ENCODE measurements at regions of chr1 and their contacts with region 1.

Region 1: GRCh38 chr1:156090822-156091188 is 8.5 kb upstream of the MEX3A start:
- DNase-seq: peak; percentile 73
- ATAC-seq: peak; percentile 95
- H3K4me3 ChIP-seq: no peak overlapping the region
- H3K27ac ChIP-seq: peak overlapping the region; percentile 40; the same call in 1 of the 2 replicates
- H3K4me1 ChIP-seq: peaks cover 18 to 30% of the 10 kb centered on the region in 2 experiments
- H3K27me3 ChIP-seq: no peaks in the 10 kb centered on the region
- CTCF ChIP-seq: peak; percentile 61 to 96 (median 80)
- POLR2A ChIP-seq: no peak
- RAD21 ChIP-seq: peak; percentile 97

Region 2: DNA sequence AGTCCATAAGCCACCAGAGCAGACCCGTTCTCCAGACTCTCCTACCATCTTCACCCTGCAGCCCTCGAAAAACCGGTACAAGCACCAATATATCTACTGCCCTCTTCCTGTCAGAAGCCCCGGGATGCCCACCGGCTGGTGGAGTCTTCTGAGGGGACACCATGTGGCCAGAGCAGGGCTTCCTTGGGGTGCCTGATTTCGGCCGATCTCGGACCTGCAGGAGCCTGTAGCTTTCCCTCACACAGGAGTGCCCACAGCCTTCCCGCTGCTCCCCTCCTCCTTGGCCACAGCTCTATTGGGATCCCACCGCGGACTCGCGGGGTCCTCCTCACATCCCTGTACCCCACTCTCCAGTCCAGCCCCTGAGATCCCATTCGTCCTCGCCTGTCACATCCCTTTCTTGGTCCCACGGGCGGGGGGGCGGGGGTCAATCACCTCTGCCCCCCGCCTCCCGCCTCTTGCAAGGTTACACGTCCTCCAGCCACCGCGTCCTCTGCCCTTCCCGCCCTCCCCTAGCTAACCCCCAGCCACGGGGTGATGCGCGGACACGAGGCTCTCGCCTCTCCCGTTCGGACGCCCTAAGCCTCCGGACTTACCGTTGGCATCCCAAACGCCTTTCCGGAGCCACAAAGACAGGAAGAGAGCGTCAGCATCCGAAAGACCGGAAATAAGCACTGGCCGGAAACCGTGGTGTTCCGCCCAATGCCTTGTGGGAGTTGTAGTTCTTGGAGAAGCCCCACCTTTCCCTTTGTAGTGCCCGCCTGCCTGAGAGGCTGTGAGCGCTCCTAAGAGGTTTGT is 70.3 kb before region 1 on chr1 and contains the start of gene SSR2:
- CTCF ChIA-PET with region 1: no interaction called
- POLR2A ChIA-PET with region 1: no interaction called
- RAD21 ChIA-PET with region 1: no interaction called
- intact Hi-C with region 1: no loop called
- DNase-seq: peak; percentile 84
- ATAC-seq: peak; percentile 94
- H3K4me3 ChIP-seq: peak within 1 kb of the TSS; percentile 79
- H3K27ac ChIP-seq: peak within 1 kb of the TSS; percentile 48
- H3K4me1 ChIP-seq: peaks cover 4 to 11% of the 10 kb centered on the region in 2 experiments; a peak in 2 of 4 replicates
- H3K27me3 ChIP-seq: no peaks in the 10 kb centered on the region
- CTCF ChIP-seq: no peak
- POLR2A ChIP-seq: peak; percentile 62
- RAD21 ChIP-seq: no peak
- total RNA-seq, gene SSR2: 153 TPM

Region 3: DNA sequence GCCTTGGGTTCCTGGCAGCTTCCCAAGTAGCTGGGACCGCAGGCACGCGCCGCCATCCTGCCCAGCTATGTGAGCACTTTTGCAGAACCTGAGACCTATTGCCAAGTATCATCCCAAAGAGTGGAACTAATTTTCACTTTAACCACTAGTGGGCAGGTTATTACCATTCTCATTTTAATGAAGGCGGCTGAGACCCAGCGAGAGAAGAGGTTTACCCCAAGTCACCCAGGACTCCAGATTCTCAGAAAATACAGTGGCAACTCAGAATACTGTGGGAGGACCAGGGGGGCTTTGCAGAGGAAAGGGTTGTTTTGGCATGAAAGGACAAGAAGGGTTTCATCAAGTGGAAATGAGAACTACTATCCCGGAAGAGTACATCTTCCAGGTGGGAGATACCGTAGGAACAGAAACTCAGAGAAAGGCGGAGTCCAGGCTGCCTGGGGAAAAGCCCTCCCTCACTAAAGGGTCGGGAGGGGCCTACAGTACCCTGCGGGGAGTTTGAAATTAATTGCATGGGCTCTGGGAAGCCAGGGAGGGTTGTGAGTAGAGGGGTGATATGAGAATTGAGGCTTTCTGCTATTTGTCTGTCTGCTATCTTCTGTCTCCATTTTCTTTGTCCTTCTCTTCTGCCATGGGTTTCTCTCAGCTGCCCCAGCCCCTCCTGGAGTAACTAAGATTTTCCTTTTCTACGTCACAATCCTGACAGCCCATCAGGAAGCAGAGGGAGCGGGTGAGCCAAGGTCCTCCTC is 55.4 kb after region 1 on chr1:
- CTCF ChIA-PET with region 1: interaction called, 3 read pairs
- POLR2A ChIA-PET with region 1: interaction called, 3 read pairs
- RAD21 ChIA-PET with region 1: no interaction called
- intact Hi-C with region 1: loop called (anchors 1 kb)
- DNase-seq: peak; percentile 74
- ATAC-seq: peak; percentile 82
- H3K4me3 ChIP-seq: no peak overlapping the region
- H3K27ac ChIP-seq: no peak overlapping the region
- H3K4me1 ChIP-seq: peaks cover 9 to 17% of the 10 kb centered on the region in 2 experiments
- H3K27me3 ChIP-seq: no peaks in the 10 kb centered on the region; the same call in 1 of the 2 replicates
- CTCF ChIP-seq: peak; percentile 61 to 91 (median 82)
- POLR2A ChIP-seq: no peak
- RAD21 ChIP-seq: peak; percentile 91

Region 4: DNA sequence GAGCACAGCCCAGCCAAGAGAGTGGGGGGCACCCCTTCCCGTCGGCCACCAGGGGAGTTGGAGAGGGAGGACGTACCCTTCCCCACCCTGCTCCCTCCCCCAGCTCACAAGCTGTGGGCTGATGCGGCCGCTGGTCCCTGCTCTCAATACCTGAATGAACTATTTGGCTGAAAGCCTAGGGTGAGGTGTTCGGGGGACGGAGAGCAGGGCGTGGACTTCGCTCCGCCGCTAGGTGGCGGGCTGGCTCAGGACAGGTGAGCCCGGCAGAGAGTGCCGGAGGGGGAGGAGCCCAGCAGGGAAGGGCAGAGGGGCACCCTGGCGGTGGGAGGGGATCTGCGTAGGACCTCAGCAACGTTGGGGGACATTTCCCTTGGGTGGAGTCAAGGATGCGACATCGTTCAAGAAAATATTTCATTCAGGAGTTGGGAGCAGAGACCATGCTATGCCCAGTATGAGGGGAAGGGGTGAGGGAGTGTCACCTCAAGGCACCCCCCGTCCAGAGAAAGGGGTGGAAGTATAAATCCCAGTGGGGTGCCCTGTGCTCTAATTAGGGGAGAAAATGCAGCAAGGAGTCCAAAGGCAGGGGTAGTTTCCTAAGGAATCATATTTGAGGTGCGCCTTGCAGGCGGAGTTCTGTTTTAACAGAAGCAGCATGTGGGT is 266.2 kb after region 1 on chr1:
- CTCF ChIA-PET with region 1: no interaction called
- POLR2A ChIA-PET with region 1: no interaction called
- RAD21 ChIA-PET with region 1: interaction called in 1 of 2 experiments, 3 read pairs
- intact Hi-C with region 1: loop called (anchors 2 kb)
- DNase-seq: peak; percentile 69
- ATAC-seq: peak; percentile 96
- H3K4me3 ChIP-seq: peak overlapping the region; percentile 30 to 43
- H3K27ac ChIP-seq: no peak overlapping the region
- H3K4me1 ChIP-seq: peaks cover 13 to 17% of the 10 kb centered on the region in 2 experiments; a peak in 3 of 4 replicates
- H3K27me3 ChIP-seq: no peaks in the 10 kb centered on the region
- CTCF ChIP-seq: peak; percentile 88 to 97 (median 95)
- POLR2A ChIP-seq: no peak
- RAD21 ChIP-seq: peak; percentile 73

Measured in HCT116 (cell line).